ENCODE measurements at regions of chr3 and their contacts with region 1.

Region 1: GRCh38 chr3:184543843-184544512 is 17.6 kb upstream of the EPHB3 start:
- DNase-seq: peak; percentile 79

Region 2: GRCh38 chr3:184417619-184418327 is 126.2 kb before region 1 on chr3:
- intact Hi-C with region 1: loop called (anchors 5 kb)
- DNase-seq: peak; percentile 76

Region 3: DNA sequence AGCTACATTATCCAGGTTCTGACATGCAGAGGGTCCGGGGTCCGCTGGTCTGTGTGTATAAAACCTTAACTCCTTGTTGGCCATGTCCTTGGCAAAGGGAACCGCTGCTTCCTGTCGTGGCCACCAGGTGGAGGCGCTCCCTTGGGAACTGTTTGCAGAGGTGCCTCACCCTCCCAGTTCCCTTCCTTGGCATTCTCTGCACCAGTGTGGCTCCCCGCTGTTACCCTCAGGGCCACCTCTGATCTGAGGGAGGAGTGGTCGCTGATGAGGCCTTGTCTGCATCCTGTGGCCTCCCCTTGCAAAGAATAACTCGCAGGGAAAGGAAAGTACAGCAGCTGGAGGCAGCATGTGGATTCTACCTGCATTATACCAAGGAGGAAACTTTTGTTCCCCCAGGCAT is 74.6 kb before region 1 on chr3:
- intact Hi-C with region 1: loop called (anchors 5 kb)
- DNase-seq: peak; percentile 72

Region 4: DNA sequence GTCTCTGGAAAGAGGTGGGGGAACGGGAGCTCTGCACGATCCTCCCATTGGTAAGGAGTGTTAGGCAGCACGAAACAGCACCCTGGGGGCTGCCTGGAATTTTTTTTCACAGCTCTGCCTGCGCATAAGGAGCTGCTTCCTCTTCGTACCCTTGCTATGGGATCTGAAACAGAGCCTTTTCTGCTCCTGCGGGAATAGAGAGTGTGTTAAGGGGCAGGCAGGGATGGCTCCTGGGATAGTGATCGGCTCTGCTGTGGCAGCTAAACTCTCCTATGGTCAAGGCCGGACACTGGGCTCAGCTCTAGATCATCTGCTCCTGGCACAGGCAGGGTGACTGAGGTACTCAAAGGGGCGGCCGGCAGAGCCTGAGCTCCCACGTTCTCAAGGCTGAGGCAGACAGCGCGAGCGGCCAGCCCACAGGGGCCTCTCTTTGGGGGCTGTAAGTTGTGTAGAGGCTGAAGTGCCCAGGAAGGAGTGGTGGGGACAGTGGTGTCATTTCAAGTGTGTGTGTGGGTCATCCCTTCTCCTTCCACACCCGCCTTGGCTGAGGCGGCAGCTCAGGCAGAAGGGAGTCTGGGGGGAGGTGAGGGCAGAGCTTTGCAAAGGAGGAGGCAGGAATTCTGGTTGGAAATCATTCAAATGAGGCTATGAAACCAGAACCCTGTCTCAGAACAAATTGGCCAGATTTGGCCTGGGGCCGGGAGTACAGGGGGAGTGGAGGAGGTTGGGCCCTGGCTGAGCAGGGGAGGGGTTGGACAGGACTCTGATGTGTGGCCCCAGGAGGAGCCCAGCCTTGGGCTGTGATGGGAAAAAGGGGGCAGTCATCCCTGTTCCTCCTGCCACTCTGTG is 48.6 kb after region 1 on chr3:
- intact Hi-C with region 1: no loop called
- DNase-seq: no peak

Region 5: DNA sequence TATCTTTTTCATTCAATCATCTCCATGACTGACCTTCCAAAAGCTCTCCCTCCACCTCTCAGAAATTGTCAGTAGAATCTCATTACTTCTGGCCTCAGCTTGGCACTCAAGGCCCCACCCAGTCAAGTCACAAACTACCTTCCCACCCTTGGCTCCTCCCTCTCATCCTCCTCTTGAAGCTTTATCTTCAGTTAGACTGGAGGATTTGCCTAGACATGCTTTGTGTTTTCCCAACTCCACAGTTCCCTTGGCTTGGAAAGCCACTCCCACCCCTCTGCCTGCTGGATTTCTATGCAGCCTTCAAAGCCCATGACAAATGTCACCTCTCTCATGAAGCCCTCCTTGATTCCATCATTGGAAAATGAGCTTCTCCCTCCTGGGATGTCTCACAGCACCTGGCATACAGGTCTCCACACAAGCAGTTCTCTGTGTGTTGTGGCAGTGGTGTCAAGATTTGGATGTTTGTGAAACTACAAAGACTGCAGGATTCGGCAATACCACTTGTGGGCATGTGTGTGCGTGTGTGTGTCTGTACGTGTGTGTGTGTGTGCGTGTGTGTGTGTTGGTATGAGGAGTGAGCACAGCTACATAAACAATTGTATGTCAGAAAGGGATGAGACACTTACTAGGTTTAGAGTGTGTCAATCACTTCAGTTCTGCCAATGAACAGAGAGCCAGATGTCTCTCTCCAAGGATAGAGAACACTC is 222.7 kb after region 1 on chr3:
- intact Hi-C with region 1: no loop called
- DNase-seq: no peak

Measured in cardiac septum (tissue), 1 donor.